ENCODE measurements at regions of chr11 and their contacts with region 1.

Region 1: DNA sequence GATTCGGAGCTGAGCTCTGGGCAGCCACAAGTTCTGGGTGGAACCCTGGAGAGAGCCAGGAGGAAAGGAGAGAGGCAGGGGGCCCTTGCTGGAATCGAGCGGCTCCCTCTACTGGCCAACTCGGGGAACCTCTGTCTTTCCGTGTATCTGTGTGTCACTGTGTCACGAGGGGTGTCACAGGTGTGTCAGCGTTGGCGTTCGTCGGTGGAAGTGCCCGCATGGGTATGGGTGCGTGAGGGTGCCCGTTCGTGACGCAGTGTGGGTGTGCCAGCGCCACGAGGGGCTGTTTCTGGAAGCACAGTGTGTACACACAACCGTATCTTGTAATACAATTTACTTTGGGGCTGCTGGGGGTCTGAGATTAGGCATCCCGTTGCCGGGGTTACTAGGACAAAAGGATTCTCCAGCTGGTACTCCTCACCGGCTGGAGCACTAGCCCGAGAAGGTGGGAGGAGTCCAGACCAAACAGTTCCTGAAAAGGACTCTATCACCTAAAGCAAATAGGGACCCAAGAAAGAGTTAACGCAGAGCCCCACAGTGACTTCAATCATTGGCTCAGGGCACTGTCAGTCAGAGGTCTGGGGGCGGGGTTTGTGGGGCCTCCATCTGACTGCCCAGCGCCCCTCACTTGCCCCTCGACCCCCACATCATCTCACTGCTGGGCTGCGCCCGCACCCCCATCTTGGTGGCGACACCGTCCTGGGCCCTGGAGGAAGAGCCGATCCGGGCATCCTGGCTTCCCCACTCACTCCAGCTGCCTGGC is 2.6 kb upstream of the BCL9L start:
- DNase-seq: peak; percentile 94 to 100 (median 97)
- H3K4me3 ChIP-seq: peak overlapping the region; percentile 89 to 97
- H3K4me3 Mint-ChIP-seq: peak overlapping the region; percentile 85 to 97 (median 94)
- H3K27ac ChIP-seq: peak overlapping the region; percentile 99
- H3K27ac Mint-ChIP-seq: peak overlapping the region; percentile 97 to 100 (median 100)
- H3K4me1 ChIP-seq: peaks cover 36% of the 10 kb centered on the region
- H3K4me1 Mint-ChIP-seq: peaks cover 26 to 65% (median 34%) of the 10 kb centered on the region in 4 donors
- H3K27me3 ChIP-seq: no peaks in the 10 kb centered on the region
- H3K27me3 Mint-ChIP-seq: peaks cover 1 to 2% of the 10 kb centered on the region in 2 donors

Region 2: GRCh38 chr11:118659314-118659952 is 268.9 kb before region 1 on chr11:
- CTCF ChIA-PET with region 1: no interaction called
- POLR2A ChIA-PET with region 1: no interaction called
- intact Hi-C with region 1: loop called (anchors 1 kb)
- DNase-seq: peak; percentile 80 to 87 (median 80)
- H3K4me3 ChIP-seq: no peak overlapping the region
- H3K4me3 Mint-ChIP-seq: peak overlapping the region in 1 of 8 donors; percentile 34
- H3K27ac ChIP-seq: no peak overlapping the region
- H3K27ac Mint-ChIP-seq: no peak overlapping the region
- H3K4me1 ChIP-seq: peaks cover 11% of the 10 kb centered on the region
- H3K4me1 Mint-ChIP-seq: peaks cover 0 to 5% (median 2%) of the 10 kb centered on the region in 4 donors
- H3K27me3 ChIP-seq: no peaks in the 10 kb centered on the region
- H3K27me3 Mint-ChIP-seq: no peaks in the 10 kb centered on the region

Region 3: DNA sequence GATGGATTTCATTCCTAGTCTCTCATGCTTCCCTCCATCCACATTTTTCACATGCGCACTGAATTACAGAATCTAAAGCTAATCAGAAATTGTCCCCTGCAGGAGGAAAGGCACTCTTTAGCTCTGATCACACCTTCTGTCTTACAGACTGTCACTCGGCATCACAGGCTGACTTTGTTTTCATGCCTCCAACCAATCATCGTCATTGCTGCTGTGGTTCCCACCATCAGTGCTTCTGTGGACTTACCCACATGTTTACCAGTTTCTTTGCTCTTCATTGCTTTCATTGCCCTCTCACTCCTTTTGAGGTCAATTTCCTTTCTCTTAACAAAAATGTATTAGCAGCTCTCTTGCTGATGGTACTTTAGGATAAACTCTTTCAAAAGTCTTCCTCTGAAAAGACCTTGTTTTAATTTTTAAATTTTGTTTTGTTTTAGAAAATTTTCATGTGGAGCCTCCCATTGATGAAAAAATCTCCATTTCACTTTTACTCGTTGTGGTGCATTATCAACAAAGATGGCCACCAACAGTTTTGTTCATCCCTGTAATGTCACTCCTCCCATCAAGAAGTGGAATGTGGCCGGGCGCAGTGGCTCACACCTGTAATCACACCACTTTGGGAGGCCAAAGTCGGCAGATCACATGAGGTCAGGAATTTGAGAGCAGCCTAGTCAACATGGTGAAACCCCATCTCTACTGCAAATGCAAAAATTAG is 228.6 kb before region 1 on chr11:
- CTCF ChIA-PET with region 1: interaction called, 4 read pairs
- POLR2A ChIA-PET with region 1: interaction called, 14 read pairs
- intact Hi-C with region 1: no loop called
- DNase-seq: peak; percentile 82 to 89 (median 86)
- H3K4me3 ChIP-seq: no peak overlapping the region
- H3K4me3 Mint-ChIP-seq: peak overlapping the region in 7 of 8 donors; percentile 51 to 86 (median 73)
- H3K27ac ChIP-seq: peak overlapping the region; percentile 40
- H3K27ac Mint-ChIP-seq: peak overlapping the region; percentile 83 to 99 (median 98)
- H3K4me1 ChIP-seq: peaks cover 83% of the 10 kb centered on the region
- H3K4me1 Mint-ChIP-seq: peaks cover 33 to 73% (median 49%) of the 10 kb centered on the region in 4 donors
- H3K27me3 ChIP-seq: no peaks in the 10 kb centered on the region
- H3K27me3 Mint-ChIP-seq: no peaks in the 10 kb centered on the region

Region 4: DNA sequence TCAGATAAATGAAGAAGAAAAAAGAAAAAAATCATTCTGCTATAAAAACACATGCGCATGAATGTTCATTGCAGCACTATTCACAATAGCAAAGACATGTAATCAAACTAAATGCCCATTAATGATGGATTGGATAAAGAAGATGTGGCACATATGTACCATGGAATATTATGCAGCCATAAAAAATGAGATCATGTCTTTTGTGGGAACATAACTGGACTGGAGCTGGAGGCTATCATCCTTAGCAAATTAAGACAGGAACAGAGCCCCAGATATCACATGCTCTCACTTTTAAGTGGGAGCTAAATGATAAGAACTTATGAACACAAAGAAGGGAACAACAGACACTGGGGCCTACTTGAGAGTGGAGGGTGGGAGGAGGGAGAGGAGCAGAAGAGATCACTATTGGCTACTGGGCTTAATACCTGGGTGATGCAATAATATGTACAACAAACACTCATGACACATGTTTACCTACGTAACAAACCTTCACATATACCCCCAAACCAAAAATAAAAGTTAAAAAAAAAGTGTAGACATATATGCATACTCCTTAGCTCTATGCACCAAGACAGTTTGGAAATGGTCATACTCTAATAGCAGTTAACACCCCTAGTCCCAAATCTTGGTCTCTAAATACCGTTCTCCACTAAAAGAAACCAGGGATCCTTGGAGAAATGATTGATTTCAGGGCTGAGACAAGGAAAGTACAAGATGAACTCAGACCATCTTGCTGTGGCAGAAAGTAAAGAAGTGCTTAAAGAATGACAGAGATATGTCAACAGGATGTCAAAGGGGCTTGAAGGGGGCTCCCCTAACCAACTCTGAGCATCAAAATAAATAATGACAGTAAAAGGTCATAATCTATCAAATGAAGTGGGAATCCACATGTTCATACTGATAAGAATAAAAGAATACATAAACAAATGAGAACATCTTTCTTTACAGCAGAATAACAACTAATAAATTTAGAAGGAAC is 120.2 kb before region 1 on chr11:
- CTCF ChIA-PET with region 1: no interaction called
- POLR2A ChIA-PET with region 1: no interaction called
- intact Hi-C with region 1: no loop called
- DNase-seq: no peak
- H3K4me3 ChIP-seq: no peak overlapping the region
- H3K4me3 Mint-ChIP-seq: no peak overlapping the region
- H3K27ac ChIP-seq: no peak overlapping the region
- H3K27ac Mint-ChIP-seq: peak overlapping the region in 2 of 7 donors; percentile 19 to 43
- H3K4me1 ChIP-seq: no peaks in the 10 kb centered on the region
- H3K4me1 Mint-ChIP-seq: peaks cover 0 to 9% (median 3%) of the 10 kb centered on the region in 4 donors
- H3K27me3 ChIP-seq: no peaks in the 10 kb centered on the region
- H3K27me3 Mint-ChIP-seq: no peaks in the 10 kb centered on the region

Region 5: GRCh38 chr11:118878163-118878563 is 50.1 kb before region 1 on chr11:
- CTCF ChIA-PET with region 1: interaction called, 11 read pairs
- POLR2A ChIA-PET with region 1: interaction called, 40 read pairs
- intact Hi-C with region 1: loop called (anchors 2 kb)
- DNase-seq: peak; percentile 46 to 64 (median 51)
- H3K4me3 ChIP-seq: no peak overlapping the region
- H3K4me3 Mint-ChIP-seq: peak overlapping the region in 7 of 8 donors; percentile 17 to 90 (median 59)
- H3K27ac ChIP-seq: peak overlapping the region; percentile 69
- H3K27ac Mint-ChIP-seq: peak overlapping the region; percentile 95 to 99 (median 98)
- H3K4me1 ChIP-seq: peaks cover 94% of the 10 kb centered on the region
- H3K4me1 Mint-ChIP-seq: peaks cover 71 to 97% (median 83%) of the 10 kb centered on the region in 4 donors
- H3K27me3 ChIP-seq: no peaks in the 10 kb centered on the region
- H3K27me3 Mint-ChIP-seq: no peaks in the 10 kb centered on the region

Region 6: DNA sequence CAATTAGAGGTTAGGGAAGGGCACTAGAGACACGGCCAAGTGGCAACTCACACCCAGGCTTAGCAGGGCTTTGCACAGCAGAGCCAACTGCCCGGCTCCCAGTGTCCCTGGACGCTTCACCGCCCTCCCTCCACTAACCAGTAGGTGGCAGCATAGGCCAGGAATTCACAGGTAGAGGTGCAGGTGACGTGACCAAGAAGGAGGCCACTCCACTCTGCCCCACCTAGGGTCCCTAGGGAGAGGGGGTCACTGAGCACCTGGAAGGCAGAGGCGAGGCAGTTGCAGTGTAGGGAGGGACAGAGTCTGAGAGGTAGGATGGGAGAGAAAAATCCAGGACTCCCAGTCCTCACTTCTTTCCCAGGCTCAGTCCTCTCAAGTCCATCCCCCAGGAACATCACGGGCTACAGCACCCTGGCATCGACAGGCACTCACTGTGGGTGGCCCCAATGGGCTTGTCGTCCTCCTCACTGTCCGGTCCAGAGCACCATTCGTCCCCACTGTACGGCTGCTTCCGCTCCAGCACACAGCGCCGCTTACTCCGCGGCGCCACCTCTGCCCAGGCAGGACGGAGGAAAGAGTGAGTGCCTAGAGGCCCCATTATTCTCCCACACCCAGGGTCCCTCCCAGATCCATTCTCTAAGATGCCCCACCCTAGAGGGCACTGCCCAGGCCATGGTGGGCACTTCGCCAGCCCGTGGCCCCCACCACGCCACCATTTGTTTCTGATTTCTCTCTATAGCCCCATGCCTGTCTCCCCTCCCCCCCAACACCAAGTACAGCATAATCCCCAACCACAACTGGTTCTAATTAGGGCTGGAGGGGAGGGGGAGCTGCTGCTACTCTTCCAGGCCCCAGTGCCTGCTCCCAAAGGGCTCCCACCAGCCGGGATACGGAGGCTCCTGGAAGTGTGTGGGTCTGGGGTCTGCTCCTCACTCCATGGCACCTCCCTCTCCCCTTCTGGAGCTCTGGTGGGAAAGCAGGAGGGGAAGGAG is 20.9 kb before region 1 on chr11:
- CTCF ChIA-PET with region 1: interaction called, 3 read pairs
- POLR2A ChIA-PET with region 1: no interaction called
- intact Hi-C with region 1: loop called (anchors 1 kb)
- DNase-seq: peak; percentile 80 to 86 (median 83)
- H3K4me3 ChIP-seq: no peak overlapping the region
- H3K4me3 Mint-ChIP-seq: peak overlapping the region in 6 of 8 donors; percentile 0 to 85 (median 54)
- H3K27ac ChIP-seq: peak overlapping the region; percentile 40
- H3K27ac Mint-ChIP-seq: peak overlapping the region; percentile 91 to 96 (median 95)
- H3K4me1 ChIP-seq: peaks cover 55% of the 10 kb centered on the region
- H3K4me1 Mint-ChIP-seq: peaks cover 32 to 51% (median 42%) of the 10 kb centered on the region in 4 donors
- H3K27me3 ChIP-seq: no peaks in the 10 kb centered on the region
- H3K27me3 Mint-ChIP-seq: no peaks in the 10 kb centered on the region

Region 7: GRCh38 chr11:118939953-118940598 is 11.8 kb after region 1 on chr11:
- CTCF ChIA-PET with region 1: interaction called, 22 read pairs
- POLR2A ChIA-PET with region 1: interaction called, 20 read pairs
- intact Hi-C with region 1: no loop called
- DNase-seq: peak in 4 of 5 donors; percentile 37 to 71 (median 44)
- H3K4me3 ChIP-seq: peak overlapping the region in 1 of 2 donors; percentile 6
- H3K4me3 Mint-ChIP-seq: peak overlapping the region in 6 of 8 donors; percentile 9 to 62 (median 53)
- H3K27ac ChIP-seq: peak overlapping the region; percentile 6
- H3K27ac Mint-ChIP-seq: peak overlapping the region in 3 of 7 donors; percentile 43 to 53 (median 52)
- H3K4me1 ChIP-seq: peaks cover 18% of the 10 kb centered on the region
- H3K4me1 Mint-ChIP-seq: peaks cover 22 to 47% (median 32%) of the 10 kb centered on the region in 4 donors
- H3K27me3 ChIP-seq: no peaks in the 10 kb centered on the region
- H3K27me3 Mint-ChIP-seq: peaks cover 0 to 1% of the 10 kb centered on the region in 2 donors

Region 8: DNA sequence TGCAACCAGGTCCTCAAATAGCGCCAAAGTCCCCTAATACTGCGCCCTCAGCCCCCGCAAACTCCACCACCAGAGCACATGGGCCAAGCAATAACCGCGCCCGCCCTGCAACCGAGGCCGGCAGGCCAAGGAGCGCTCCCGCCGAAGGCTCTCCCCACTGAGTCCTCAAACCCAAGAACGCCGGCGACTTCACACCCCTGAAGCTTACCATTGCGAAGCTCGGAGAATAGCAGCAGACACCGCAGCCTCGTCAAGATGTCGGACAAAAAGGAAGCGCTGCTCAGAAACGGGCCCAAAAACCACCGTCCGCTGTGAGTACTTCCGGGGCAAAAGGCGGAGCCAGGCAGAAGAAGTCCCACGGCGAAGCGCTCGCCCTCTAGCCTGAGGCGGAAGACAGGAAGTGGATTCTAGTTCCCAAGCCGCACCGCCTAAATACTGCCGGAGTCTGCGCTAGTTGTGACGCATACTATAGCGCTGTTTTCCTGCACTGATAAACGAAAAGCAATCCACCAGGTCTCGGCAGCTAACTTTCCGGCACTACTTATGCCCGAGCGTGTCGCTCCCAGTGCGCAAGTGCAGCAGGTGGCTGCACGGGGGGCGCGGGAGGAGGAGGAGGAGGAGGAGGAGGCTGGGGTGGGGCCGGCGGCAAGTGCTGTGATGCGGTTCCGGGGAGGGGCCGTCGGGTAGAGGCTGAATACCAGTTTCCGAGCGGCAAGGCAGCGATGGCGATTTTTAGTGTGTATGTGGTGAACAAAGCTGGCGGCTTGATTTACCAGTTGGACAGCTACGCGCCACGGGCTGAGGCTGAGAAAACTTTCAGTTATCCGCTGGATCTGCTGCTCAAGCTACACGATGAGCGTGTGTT is 90.0 kb after region 1 on chr11 and contains the starts of genes RPS25 and TRAPPC4:
- CTCF ChIA-PET with region 1: interaction called, 3 read pairs
- POLR2A ChIA-PET with region 1: interaction called, 3 read pairs
- intact Hi-C with region 1: loop called (anchors 2 kb)
- DNase-seq: peak; percentile 96 to 98 (median 97)
- H3K4me3 ChIP-seq: peak within 1 kb of the TSS; percentile 71 to 96
- H3K4me3 Mint-ChIP-seq: peak within 1 kb of the TSS; percentile 94 to 100 (median 99)
- H3K27ac ChIP-seq: peak within 1 kb of the TSS; percentile 87
- H3K27ac Mint-ChIP-seq: peak within 1 kb of the TSS; percentile 98 to 100 (median 100)
- H3K4me1 ChIP-seq: peaks cover 52% of the 10 kb centered on the region
- H3K4me1 Mint-ChIP-seq: peaks cover 21 to 73% (median 51%) of the 10 kb centered on the region in 4 donors
- H3K27me3 ChIP-seq: no peaks in the 10 kb centered on the region
- H3K27me3 Mint-ChIP-seq: no peaks in the 10 kb centered on the region
- total RNA-seq, gene RPS25: 2,545 to 2,705 TPM
- total RNA-seq, gene TRAPPC4: 89.2 to 97.3 TPM